Common myeloid progenitor, CD34-positive (primary cell): ENCODE measurements at regions of chr19 and their contacts with region 1.

Region 1: DNA sequence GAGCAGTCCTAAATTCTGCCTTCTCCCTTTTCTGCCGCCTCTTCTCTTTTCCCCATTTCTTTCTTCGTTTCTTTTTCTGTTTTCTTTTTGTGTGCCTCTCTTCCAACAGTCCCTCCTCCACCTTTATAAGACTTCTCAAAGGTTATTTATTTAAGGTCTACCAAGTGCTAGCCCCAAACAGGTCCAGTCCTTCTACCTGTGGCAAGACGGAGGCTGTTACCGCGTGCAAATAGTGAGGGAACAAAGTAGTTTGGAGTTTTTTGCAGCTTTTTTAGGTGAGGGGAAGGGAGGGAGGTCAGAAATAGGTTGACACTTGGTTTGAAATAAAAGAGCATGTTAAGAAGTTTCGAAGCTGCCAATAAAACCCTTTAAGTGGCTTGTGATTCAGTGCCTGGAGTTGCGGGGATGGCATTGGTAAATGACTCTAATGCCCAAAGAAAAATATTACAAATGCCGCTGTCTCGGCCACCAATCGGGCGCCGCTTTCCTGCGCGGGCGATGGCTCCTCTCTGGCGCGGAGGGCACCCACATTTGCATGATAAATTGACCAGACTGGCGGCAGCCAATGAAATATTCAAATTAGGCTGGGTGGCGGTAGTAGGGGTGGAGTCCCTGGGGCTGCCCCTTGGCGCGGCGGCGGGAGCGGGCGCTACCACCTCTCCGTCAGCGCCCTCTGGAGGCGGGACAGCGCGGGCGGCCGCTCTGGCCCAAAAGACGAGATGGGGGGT is 7.5 kb upstream of the TSHZ3 start:
- DNase-seq: peak; percentile 61 to 72 (median 61)
- H3K4me3 ChIP-seq: peak overlapping the region in 2 of 7 experiments; percentile 21 to 32
- H3K27ac ChIP-seq: no peak overlapping the region
- H3K4me1 ChIP-seq: peaks cover 0 to 26% (median 7%) of the 10 kb centered on the region in 4 experiments
- H3K27me3 ChIP-seq: peaks cover 16 to 88% (median 59%) of the 10 kb centered on the region in 5 experiments

Region 2: DNA sequence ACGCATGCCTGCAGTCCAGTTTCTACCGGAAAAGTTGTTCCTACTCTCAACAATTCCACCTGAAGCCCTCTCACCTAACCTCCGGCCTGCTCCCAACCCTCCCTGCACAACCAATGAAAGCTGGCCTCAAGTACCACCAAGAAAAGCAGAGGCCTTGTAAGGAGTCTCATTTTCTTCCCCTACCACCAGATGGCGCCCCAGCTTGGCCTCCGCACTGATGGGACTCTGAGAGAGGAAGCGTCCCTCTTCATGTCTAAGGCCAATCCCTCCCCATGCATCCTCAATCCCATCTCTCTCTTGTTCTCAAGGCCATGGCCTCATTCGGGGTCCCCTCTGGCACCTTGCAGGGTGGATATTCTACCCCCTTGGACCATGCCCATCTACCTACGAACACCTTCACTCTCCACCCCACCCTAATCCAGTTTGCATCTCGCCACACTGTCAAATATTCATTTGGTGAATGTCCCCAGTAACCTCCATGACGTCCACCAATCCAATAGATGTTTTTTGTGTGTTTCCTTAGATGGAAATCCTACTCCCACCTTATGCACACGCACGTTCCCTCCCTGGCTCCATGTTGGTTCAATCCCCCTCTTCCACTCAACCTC is 571.8 kb before region 1 on chr19:
- CTCF ChIA-PET with region 1: interaction called, 10 read pairs
- POLR2A ChIA-PET with region 1: no interaction called
- DNase-seq: peak; percentile 60 to 77 (median 71)
- H3K4me3 ChIP-seq: no peak overlapping the region
- H3K27ac ChIP-seq: no peak overlapping the region
- H3K4me1 ChIP-seq: no peaks in the 10 kb centered on the region
- H3K27me3 ChIP-seq: peaks cover 0 to 3% (median 0%) of the 10 kb centered on the region in 5 experiments

Region 3: DNA sequence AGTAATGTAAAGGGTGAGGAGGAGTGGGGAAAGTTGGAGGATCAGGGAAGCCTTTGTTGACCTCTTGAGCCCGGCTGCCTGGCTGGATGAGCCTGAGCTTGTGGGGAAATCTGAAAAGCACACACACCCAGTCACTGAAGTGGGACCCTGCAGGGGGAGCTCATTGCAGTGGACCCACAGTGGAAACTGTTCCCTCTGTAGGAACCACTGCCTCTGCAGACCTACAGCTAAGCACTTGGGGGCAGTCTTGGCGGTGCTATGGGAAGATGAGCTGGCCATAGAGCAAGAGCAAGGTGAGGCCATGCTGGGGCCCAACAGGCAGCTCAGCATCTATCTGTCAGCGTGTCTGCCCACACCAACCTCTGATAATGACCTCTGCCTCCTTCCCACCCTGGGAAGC is 302.3 kb before region 1 on chr19:
- CTCF ChIA-PET with region 1: interaction called, 10 read pairs
- POLR2A ChIA-PET with region 1: no interaction called
- DNase-seq: peak; percentile 61 to 73 (median 73)
- H3K4me3 ChIP-seq: no peak overlapping the region
- H3K27ac ChIP-seq: no peak overlapping the region
- H3K4me1 ChIP-seq: peaks cover 0 to 3% (median 0%) of the 10 kb centered on the region in 4 experiments
- H3K27me3 ChIP-seq: peaks cover 0 to 5% (median 0%) of the 10 kb centered on the region in 5 experiments

Region 4: DNA sequence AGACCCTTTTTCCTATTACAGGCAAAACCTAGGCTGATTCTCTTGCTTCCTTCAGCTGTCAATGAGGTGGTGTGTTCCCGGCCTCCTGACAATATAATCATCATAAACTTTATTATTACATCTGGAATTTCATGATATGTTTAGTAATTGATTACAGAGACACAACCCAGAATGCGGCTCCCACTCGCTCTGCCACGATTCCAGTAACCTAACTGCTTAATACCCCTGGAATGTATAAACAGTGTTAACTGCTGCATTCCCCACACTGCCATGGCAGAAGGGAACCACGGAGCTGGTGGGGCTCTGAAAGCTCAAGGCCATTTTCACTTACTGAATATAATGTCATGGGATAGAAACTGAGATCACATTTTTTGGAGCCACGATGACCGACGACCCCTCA is 24.7 kb before region 1 on chr19:
- CTCF ChIA-PET with region 1: no interaction called
- POLR2A ChIA-PET with region 1: no interaction called
- DNase-seq: no peak
- H3K4me3 ChIP-seq: no peak overlapping the region
- H3K27ac ChIP-seq: no peak overlapping the region
- H3K4me1 ChIP-seq: no peaks in the 10 kb centered on the region
- H3K27me3 ChIP-seq: peaks cover 0 to 7% (median 0%) of the 10 kb centered on the region in 5 experiments